ENCODE measurements at regions of chr1 and their contacts with region 1.

Region 1: DNA sequence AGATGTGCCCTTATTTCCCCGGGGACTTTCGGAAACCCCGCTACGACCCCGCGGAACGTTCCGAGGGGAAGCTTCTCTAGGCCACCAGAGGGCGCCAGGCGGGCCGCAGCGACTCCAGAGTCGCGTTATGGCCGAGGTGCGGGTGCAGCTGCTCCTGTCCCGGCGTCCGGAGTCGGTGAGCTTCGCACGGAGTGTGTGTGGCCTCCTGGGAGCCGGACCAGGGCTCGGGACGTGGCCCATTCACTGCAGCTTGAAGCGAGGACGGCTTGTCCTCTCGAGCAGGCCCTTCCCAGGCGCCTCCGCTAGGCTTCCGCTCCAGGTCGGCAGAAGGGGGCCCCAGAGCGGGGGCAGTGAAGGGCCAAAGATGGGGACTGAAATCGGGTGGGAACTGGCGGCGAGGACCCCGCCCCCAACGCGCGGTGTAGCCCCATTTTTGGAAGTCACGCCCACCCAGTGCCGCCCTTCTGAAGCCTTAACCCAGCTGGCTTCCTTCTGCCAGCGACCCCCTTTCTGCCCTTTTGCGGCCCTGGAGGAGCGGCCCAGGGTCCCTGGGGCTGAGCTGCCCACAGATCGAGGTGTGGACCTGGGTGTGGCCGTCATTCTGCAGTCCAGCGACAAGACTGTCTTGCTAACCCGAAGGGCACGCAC is at the start of gene NUDT17:
- DNase-seq: no peak
- H3K4me3 ChIP-seq: peak within 1 kb of the TSS; percentile 70
- CTCF ChIP-seq: peak; percentile 94

Region 2: GRCh38 chr1:145751491-145752037 is 94.1 kb before region 1 on chr1:
- CTCF ChIA-PET with region 1: interaction called, 12 read pairs
- POLR2A ChIA-PET with region 1: no interaction called
- DNase-seq: peak; percentile 84
- H3K4me3 ChIP-seq: no peak overlapping the region
- CTCF ChIP-seq: no peak

Region 3: GRCh38 chr1:145858894-145859490 is 13.4 kb after region 1 on chr1 and contains the start of gene PIAS3:
- CTCF ChIA-PET with region 1: interaction called, 220 read pairs
- POLR2A ChIA-PET with region 1: interaction called, 80 read pairs
- DNase-seq: peak; percentile 64
- H3K4me3 ChIP-seq: peak within 1 kb of the TSS; percentile 92
- CTCF ChIP-seq: no peak

Region 4: GRCh38 chr1:145879775-145880174 is 34.1 kb after region 1 on chr1:
- CTCF ChIA-PET with region 1: interaction called, 16 read pairs
- POLR2A ChIA-PET with region 1: no interaction called
- DNase-seq: no peak
- H3K4me3 ChIP-seq: no peak overlapping the region
- CTCF ChIP-seq: no peak

Region 5: DNA sequence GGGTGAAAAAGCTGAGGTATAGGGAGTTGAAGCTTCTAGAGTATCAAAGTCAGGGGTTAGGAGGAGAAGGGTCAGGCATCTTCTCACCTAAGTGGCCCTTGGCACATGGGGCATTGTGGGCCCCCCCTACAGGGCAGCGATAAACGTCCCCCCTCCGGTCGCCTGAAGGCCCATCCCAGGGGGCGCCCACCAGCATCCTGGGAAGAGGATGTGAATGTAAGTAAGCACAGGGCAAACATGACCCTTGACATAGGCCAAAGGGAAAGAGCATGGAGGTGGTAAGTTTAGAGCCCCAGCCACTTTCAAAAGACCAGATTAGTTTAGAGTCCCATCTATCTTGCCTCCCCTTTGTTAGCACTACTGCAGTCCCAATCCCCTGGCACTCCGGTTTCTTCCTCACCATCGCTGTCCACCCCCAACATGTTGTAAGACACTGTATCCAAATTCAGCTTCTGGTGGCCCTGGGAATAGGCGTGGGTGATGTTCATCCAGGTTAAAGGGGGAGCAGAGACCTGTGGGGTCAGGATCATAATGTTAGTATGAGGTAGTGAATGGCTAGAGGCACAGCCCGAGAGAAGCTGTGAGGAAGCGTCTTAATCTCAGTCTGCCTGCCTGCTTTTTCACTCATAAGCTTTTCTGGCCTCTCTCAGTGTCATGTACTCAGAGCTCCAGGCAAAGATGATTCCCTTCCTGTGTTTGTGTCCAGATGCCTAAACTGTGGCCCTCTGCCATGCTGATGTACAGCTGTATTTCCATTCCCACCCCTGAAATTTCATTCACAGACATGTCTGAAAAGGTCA is 61.5 kb after region 1 on chr1:
- CTCF ChIA-PET with region 1: interaction called, 142 read pairs
- POLR2A ChIA-PET with region 1: interaction called, 4 read pairs
- DNase-seq: no peak
- H3K4me3 ChIP-seq: no peak overlapping the region
- CTCF ChIP-seq: no peak

Region 6: DNA sequence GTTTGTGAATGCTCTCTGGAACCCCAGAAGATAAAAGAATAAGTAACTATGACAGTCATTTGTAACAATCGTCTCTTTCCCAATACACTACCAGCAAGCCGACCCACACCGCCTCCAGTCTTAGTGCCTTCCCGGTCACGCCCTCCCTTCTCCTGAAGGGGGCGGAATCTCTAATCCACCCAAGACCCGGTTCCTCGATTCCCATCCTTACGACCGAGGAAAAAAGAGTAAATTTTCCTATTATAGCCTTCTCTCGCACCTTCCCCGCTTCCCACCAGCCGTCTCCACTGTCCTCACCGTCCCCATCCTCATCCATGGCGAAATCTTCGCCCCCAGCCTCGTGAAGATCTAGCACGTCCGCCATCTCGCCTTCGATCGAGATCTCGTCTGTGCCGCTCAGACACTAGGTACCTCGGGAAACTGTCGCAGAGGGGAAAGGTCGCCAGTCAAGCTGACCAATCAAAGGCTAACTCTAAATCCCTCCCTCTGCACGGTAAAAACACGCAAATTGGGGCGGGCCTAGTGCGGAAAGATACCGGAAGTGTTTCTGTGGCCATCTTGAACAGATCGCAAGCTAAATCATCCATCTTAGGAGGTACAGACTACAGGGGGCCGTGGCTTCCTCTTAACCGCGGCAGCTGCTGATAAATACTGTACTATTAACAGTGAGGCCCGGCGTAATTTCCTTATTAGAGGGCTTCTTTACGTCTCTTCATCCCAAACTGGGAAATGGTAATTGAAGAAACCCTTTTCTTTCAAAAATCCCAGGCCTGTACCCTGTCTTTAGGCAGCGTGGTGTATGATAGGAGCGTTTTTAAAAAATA is 81.6 kb after region 1 on chr1 and contains the start of gene RBM8A:
- CTCF ChIA-PET with region 1: interaction called, 18 read pairs
- POLR2A ChIA-PET with region 1: interaction called, 3 read pairs
- DNase-seq: peak; percentile 92
- H3K4me3 ChIP-seq: peak within 1 kb of the TSS; percentile 87
- CTCF ChIP-seq: peak; percentile 63

Region 7: DNA sequence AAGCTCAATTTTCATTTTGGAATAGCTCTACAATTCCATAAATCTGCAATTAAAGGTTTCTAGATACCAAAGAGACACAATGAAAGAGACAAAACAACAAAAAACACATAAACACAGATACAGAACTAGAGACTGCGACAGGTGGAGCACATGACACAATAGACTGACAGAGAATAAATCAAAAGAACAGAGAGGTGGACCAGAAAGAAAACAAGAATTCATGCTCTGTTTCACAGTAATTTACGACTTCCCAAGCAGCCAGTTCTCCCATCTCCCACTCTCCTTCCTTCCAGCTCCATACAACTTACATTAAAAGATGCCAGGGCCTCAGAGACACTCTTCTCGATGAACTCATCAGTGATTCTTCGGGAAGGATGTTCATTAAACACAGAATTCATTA is 96.8 kb after region 1 on chr1:
- CTCF ChIA-PET with region 1: no interaction called
- POLR2A ChIA-PET with region 1: no interaction called
- DNase-seq: no peak
- H3K4me3 ChIP-seq: no peak overlapping the region
- CTCF ChIP-seq: no peak

Region 8: DNA sequence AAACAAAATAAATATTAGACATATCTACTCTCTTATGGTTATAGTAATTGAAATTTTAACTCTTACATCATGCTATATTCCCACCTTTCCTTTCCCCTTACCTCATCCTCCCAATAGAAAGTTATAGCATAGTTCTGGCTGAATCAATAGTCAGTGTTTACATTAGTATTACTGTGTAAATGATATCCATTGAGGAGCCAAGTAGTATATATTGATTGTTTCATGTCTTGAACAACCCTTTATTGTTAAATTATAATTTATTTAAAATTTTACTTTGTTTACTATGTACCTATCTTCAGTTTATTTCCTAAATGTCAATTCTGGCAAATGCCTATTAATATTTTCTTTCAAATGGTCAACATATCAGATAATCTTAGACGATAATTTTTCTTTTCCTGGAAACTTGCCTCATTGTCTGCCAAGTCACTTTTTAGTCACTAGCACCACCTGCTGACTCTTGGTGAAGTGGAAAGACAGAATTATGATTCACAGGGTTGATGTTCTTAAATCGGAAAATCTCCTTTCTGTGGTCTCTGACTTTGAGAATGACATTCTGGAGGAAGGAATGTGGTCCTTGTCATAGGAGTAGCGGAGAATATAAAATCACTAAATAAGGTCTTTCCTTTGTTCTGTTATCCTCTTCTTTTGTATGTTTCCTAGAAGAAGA is 167.2 kb after region 1 on chr1:
- CTCF ChIA-PET with region 1: interaction called, 252 read pairs
- POLR2A ChIA-PET with region 1: interaction called, 4 read pairs
- DNase-seq: no peak
- H3K4me3 ChIP-seq: no peak overlapping the region
- CTCF ChIP-seq: peak; percentile 53

Measured in AG04449 (cell line).